Endothelial cell of umbilical vein (primary cell): ENCODE measurements at regions of chr18 and their contacts with region 1.

Region 1: DNA sequence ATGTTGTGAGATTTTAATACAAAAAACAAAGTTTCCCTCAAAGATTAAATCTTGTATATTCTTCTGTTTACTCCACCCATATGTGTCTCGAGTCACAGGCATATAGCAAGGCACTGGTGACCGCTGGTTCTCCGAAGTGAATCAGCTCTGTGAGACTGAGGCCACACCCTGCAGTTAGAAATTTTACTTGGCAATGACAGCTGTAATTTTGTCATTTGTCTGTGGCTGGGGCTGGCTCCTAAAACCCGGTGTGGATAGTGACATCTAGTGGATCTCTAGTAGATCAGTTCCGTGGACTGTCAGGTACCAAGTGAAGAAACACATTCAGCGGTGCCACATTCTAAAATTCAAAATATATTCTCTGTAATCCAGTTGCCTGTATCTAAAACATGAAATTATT is 278.0 kb downstream of the NEDD4L start:
- DNase-seq: peak; percentile 65
- H3K4me3 ChIP-seq: no peak overlapping the region
- H3K27ac ChIP-seq: peak overlapping the region; percentile 45
- H3K4me1 ChIP-seq: peaks cover 10% of the 10 kb centered on the region
- H3K27me3 ChIP-seq: no peaks in the 10 kb centered on the region
- CTCF ChIP-seq: peak; percentile 37 to 42
- POLR2A ChIP-seq: no peak

Region 2: DNA sequence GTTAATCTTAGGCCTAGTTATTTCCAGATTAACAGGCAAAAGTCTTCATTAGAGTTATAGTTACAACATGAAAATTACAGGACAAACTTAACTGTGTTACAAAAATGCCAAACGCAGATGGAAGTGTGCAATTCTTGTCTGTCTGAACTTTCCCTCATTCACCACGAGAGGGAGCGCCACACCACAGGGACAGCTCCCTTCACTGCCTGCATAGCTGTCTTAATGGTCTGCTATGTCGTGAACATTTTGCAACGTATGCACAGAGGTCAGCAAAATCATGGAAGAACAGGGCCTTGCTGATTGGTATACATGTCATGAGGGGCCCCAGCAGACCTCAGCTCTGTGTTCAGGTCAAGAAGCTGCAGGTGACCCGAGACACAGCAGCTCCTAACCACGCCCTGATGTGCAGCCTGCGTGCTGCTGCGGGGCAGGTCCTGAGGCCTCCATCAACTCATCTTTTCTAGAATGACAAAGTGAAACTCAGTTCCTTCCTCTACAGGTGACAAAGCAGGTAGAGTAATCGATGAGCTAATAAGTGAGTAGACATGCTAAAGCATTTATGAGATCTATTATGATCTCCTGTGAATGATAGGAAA is 440.1 kb before region 1 on chr18:
- CTCF ChIA-PET with region 1: no interaction called
- POLR2A ChIA-PET with region 1: no interaction called
- dilution Hi-C with region 1: no loop called
- intact Hi-C with region 1: loop called (anchors 5 kb)
- DNase-seq: peak; percentile 83
- H3K4me3 ChIP-seq: no peak overlapping the region
- H3K27ac ChIP-seq: no peak overlapping the region
- H3K4me1 ChIP-seq: no peaks in the 10 kb centered on the region
- H3K27me3 ChIP-seq: no peaks in the 10 kb centered on the region
- CTCF ChIP-seq: peak; percentile 85 to 91
- POLR2A ChIP-seq: no peak

Region 3: GRCh38 chr18:58043491-58044379 is 278.3 kb before region 1 on chr18 and contains the start of gene NEDD4L:
- CTCF ChIA-PET with region 1: interaction called, 11 read pairs
- POLR2A ChIA-PET with region 1: no interaction called
- dilution Hi-C with region 1: no loop called
- intact Hi-C with region 1: loop called (anchors 1 kb)
- DNase-seq: peak; percentile 87
- H3K4me3 ChIP-seq: peak within 1 kb of the TSS; percentile 75 to 93 (median 77)
- H3K27ac ChIP-seq: peak within 1 kb of the TSS; percentile 72
- H3K4me1 ChIP-seq: peaks cover 16% of the 10 kb centered on the region
- H3K27me3 ChIP-seq: no peaks in the 10 kb centered on the region
- CTCF ChIP-seq: peak; percentile 79 to 91
- POLR2A ChIP-seq: no peak
- total RNA-seq, gene NEDD4L: 78.9 and 95.9 TPM in 2 replicates

Region 4: GRCh38 chr18:58076052-58076451 is 245.9 kb before region 1 on chr18:
- CTCF ChIA-PET with region 1: no interaction called
- POLR2A ChIA-PET with region 1: no interaction called
- dilution Hi-C with region 1: no loop called
- intact Hi-C with region 1: no loop called
- DNase-seq: no peak
- H3K4me3 ChIP-seq: no peak overlapping the region
- H3K27ac ChIP-seq: no peak overlapping the region
- H3K4me1 ChIP-seq: no peaks in the 10 kb centered on the region
- H3K27me3 ChIP-seq: peaks cover 0 to 3% of the 10 kb centered on the region in 2 experiments
- CTCF ChIP-seq: no peak
- POLR2A ChIP-seq: no peak

Region 5: GRCh38 chr18:58180738-58181353 is 141.1 kb before region 1 on chr18:
- CTCF ChIA-PET with region 1: interaction called, 17 read pairs
- POLR2A ChIA-PET with region 1: no interaction called
- dilution Hi-C with region 1: no loop called
- intact Hi-C with region 1: loop called (anchors 5 kb)
- DNase-seq: peak; percentile 67
- H3K4me3 ChIP-seq: no peak overlapping the region
- H3K27ac ChIP-seq: no peak overlapping the region
- H3K4me1 ChIP-seq: peaks cover 24% of the 10 kb centered on the region
- H3K27me3 ChIP-seq: no peaks in the 10 kb centered on the region
- CTCF ChIP-seq: peak; percentile 75 to 77
- POLR2A ChIP-seq: no peak

Region 6: DNA sequence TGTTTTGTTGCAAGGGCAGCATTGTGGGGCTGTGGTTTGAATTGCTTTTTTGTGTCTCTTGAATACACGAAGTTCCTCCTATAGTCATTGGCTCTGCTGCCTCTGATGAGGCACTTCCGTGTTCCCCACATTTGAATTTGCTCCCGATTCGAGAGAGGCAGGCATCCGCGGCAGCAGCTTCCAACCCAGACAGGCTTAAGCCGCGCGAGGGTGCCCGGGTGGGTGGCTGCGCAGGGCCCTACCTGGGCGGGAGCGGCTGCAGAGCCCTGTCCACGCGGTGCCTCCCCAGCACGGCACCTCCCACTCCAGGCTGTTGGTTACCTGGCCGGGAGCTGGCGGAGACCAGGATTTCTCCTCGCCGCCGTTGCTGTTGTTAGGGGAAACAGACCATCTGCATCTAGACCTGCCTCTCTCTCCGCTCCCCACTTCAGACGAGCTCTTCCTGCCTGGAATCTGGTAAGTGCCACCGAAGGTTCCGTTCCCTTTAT is 126.7 kb before region 1 on chr18:
- CTCF ChIA-PET with region 1: interaction called, 12 read pairs
- POLR2A ChIA-PET with region 1: no interaction called
- dilution Hi-C with region 1: no loop called
- intact Hi-C with region 1: loop called (anchors 1 kb)
- DNase-seq: no peak
- H3K4me3 ChIP-seq: peak overlapping the region in 2 of 3 experiments; percentile 5 to 52
- H3K27ac ChIP-seq: peak overlapping the region; percentile 24
- H3K4me1 ChIP-seq: peaks cover 31% of the 10 kb centered on the region
- H3K27me3 ChIP-seq: no peaks in the 10 kb centered on the region
- CTCF ChIP-seq: no peak
- POLR2A ChIP-seq: no peak

Region 7: DNA sequence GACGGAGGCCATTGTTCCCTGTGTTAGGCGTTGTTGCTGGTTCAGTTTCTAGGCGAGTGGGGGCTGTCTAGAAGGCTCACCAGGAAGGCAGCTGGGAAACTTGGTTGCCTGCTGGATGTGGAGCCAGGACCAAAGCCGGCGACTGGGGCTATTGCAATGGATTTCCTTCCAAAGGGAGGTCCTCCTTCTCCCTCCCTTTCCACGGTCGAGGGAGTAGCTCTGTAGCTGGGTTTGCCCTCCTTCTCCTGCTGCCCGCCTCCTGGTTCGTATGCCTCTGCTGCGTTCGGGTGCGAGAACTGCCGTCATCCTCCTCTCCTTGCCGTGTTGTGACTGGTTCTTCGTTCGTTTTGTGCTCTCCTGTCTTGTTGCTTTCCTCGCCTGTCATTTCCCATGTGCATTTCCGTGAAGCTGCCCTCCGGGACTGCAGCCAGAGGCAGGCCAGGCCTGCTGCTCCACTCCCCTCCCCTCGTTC is 74.6 kb before region 1 on chr18:
- CTCF ChIA-PET with region 1: interaction called, 7 read pairs
- POLR2A ChIA-PET with region 1: no interaction called
- dilution Hi-C with region 1: no loop called
- intact Hi-C with region 1: loop called (anchors 1 kb)
- DNase-seq: peak; percentile 83
- H3K4me3 ChIP-seq: peak overlapping the region in 2 of 3 experiments; percentile 4 to 20
- H3K27ac ChIP-seq: peak overlapping the region; percentile 64
- H3K4me1 ChIP-seq: peaks cover 29% of the 10 kb centered on the region
- H3K27me3 ChIP-seq: no peaks in the 10 kb centered on the region
- CTCF ChIP-seq: no peak
- POLR2A ChIP-seq: no peak

Region 8: GRCh38 chr18:58338961-58339592 is 17.1 kb after region 1 on chr18:
- CTCF ChIA-PET with region 1: interaction called, 12 read pairs
- POLR2A ChIA-PET with region 1: no interaction called
- dilution Hi-C with region 1: no loop called
- intact Hi-C with region 1: no loop called
- DNase-seq: peak; percentile 73
- H3K4me3 ChIP-seq: peak overlapping the region in 1 of 3 experiments; percentile 15
- H3K27ac ChIP-seq: peak overlapping the region; percentile 25
- H3K4me1 ChIP-seq: peaks cover 15% of the 10 kb centered on the region
- H3K27me3 ChIP-seq: no peaks in the 10 kb centered on the region
- CTCF ChIP-seq: no peak
- POLR2A ChIP-seq: no peak